ENCODE measurements at regions of chr5 and their contacts with region 1.

Region 1: DNA sequence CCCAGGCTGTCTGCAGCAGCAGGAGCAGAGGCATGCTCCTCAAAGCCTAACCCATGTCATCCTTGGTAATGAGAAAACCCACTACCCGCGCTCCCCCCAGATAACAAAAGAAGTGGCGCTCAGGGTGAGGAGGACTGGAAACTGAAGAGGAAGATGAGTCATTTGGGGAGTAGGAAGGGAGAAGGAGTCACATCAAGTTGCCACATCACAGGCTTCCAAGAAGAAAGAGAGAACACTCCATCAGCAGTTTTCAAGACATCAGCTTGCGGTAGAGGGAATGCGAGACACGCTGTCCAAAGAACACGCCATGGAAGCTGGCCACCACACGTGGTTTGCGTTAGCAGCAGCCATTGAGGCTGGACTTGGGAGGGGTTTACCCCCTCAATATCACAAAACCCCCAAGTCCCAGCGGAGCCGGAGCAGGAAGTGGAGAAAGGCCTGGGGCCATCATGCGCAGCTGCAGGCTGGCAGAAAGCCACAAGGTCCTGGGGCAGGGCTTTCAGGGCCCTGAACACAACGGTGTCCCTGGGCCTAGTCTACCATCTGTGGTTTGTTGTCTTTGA is 41.5 kb downstream of the SH3PXD2B start:
- DNase-seq: peak; percentile 71
- H3K4me3 ChIP-seq: no peak overlapping the region
- H3K27ac ChIP-seq: peak overlapping the region; percentile 53
- H3K4me1 ChIP-seq: peaks cover 21% of the 10 kb centered on the region
- H3K27me3 ChIP-seq: no peaks in the 10 kb centered on the region
- CTCF ChIP-seq: no peak
- POLR2A ChIP-seq: no peak

Region 2: GRCh38 chr5:172395483-172395882 is 17.3 kb before region 1 on chr5:
- CTCF ChIA-PET with region 1: interaction called, 4 read pairs
- POLR2A ChIA-PET with region 1: no interaction called
- dilution Hi-C with region 1: no loop called
- intact Hi-C with region 1: loop called (anchors 1 kb)
- DNase-seq: peak; percentile 58
- H3K4me3 ChIP-seq: no peak overlapping the region
- H3K27ac ChIP-seq: peak overlapping the region; percentile 21
- H3K4me1 ChIP-seq: peaks cover 15% of the 10 kb centered on the region
- H3K27me3 ChIP-seq: no peaks in the 10 kb centered on the region
- CTCF ChIP-seq: no peak
- POLR2A ChIP-seq: peak; percentile 37

Region 3: GRCh38 chr5:172437445-172438308 is 24.9 kb after region 1 on chr5:
- CTCF ChIA-PET with region 1: interaction called, 3 read pairs
- POLR2A ChIA-PET with region 1: no interaction called
- dilution Hi-C with region 1: no loop called
- intact Hi-C with region 1: loop called (anchors 1 kb)
- DNase-seq: peak; percentile 95
- H3K4me3 ChIP-seq: no peak overlapping the region
- H3K27ac ChIP-seq: peak overlapping the region; percentile 40
- H3K4me1 ChIP-seq: peaks cover 14% of the 10 kb centered on the region
- H3K27me3 ChIP-seq: no peaks in the 10 kb centered on the region
- CTCF ChIP-seq: no peak
- POLR2A ChIP-seq: no peak

Region 4: GRCh38 chr5:172463031-172463430 is 50.2 kb after region 1 on chr5:
- CTCF ChIA-PET with region 1: no interaction called
- POLR2A ChIA-PET with region 1: no interaction called
- dilution Hi-C with region 1: no loop called
- intact Hi-C with region 1: no loop called
- DNase-seq: no peak
- H3K4me3 ChIP-seq: no peak overlapping the region
- H3K27ac ChIP-seq: no peak overlapping the region
- H3K4me1 ChIP-seq: peaks cover 5% of the 10 kb centered on the region
- H3K27me3 ChIP-seq: peaks cover 3 to 5% of the 10 kb centered on the region in 2 experiments
- CTCF ChIP-seq: no peak
- POLR2A ChIP-seq: no peak

Measured in endothelial cell of umbilical vein (primary cell).